HCT116 (cell line): ENCODE measurements at regions of chr10 and their contacts with region 1.

Region 1: GRCh38 chr10:69515699-69516259 is 57.4 kb downstream of the NEUROG3 start:
- DNase-seq: peak; percentile 47
- ATAC-seq: peak; percentile 96
- H3K4me3 ChIP-seq: no peak overlapping the region
- H3K27ac ChIP-seq: no peak overlapping the region
- H3K4me1 ChIP-seq: no peaks in the 10 kb centered on the region
- H3K27me3 ChIP-seq: no peaks in the 10 kb centered on the region
- CTCF ChIP-seq: peak; percentile 89 to 94 (median 89)
- POLR2A ChIP-seq: no peak
- RAD21 ChIP-seq: peak; percentile 93

Region 2: DNA sequence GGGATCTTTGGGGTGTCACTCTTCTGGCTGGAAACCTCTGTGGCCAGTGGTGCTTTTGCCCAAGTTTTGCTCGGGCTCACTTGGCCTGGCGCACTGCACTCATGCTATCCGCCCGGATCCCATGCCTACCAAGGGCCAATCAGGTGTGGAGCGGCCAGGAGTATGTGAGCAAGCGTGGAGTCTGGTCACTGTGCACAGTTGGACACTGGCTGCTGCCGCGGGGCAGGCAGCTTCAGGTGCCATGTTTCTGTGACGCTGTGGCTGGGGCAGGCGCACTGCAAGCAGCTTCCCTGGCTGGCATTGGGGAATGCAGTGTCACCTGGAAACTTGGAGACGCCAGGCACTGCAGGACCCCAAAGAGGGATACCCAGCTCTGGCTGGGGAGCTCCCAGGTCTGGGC is 12.2 kb after region 1 on chr10:
- CTCF ChIA-PET with region 1: interaction called, 25 read pairs
- POLR2A ChIA-PET with region 1: no interaction called
- RAD21 ChIA-PET with region 1: no interaction called
- intact Hi-C with region 1: no loop called
- DNase-seq: no peak
- ATAC-seq: no peak
- H3K4me3 ChIP-seq: no peak overlapping the region
- H3K27ac ChIP-seq: no peak overlapping the region
- H3K4me1 ChIP-seq: no peaks in the 10 kb centered on the region
- H3K27me3 ChIP-seq: no peaks in the 10 kb centered on the region
- CTCF ChIP-seq: no peak
- POLR2A ChIP-seq: no peak
- RAD21 ChIP-seq: no peak

Region 3: DNA sequence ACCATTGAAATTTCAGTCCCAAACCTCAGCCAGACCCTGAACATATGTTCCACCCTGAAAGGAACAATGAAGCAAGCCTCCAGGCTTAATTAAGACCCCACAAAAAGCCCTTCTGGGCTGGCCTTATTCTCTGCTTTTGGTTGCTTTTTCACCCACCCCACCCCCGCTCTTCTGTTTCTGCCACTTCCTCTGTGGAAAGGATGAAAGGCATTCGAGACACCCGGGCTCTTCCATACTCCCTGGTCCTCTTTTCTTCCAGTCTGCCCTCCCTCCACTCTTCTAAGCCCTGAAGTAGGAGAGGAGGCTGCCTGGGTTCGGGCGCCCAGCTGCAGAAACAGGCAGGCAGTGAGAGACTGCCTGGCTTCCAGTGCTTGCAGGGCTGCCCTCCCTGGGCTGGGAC is 104.8 kb after region 1 on chr10:
- CTCF ChIA-PET with region 1: no interaction called
- POLR2A ChIA-PET with region 1: no interaction called
- RAD21 ChIA-PET with region 1: no interaction called
- intact Hi-C with region 1: no loop called
- DNase-seq: no peak
- ATAC-seq: no peak
- H3K4me3 ChIP-seq: no peak overlapping the region
- H3K27ac ChIP-seq: no peak overlapping the region
- H3K4me1 ChIP-seq: no peaks in the 10 kb centered on the region; a peak in 1 of 4 replicates
- H3K27me3 ChIP-seq: no peaks in the 10 kb centered on the region
- CTCF ChIP-seq: no peak
- POLR2A ChIP-seq: no peak
- RAD21 ChIP-seq: no peak

Region 4: GRCh38 chr10:69644658-69645295 is 129.0 kb after region 1 on chr10:
- CTCF ChIA-PET with region 1: interaction called, 29 read pairs
- POLR2A ChIA-PET with region 1: no interaction called
- RAD21 ChIA-PET with region 1: interaction called in 1 of 2 experiments, 4 read pairs
- intact Hi-C with region 1: loop called (anchors 1 kb)
- DNase-seq: peak; percentile 35
- ATAC-seq: peak; percentile 84
- H3K4me3 ChIP-seq: no peak overlapping the region
- H3K27ac ChIP-seq: no peak overlapping the region
- H3K4me1 ChIP-seq: peaks cover 4 to 10% of the 10 kb centered on the region in 2 experiments
- H3K27me3 ChIP-seq: no peaks in the 10 kb centered on the region
- CTCF ChIP-seq: peak; percentile 85 to 93 (median 91)
- POLR2A ChIP-seq: no peak
- RAD21 ChIP-seq: peak; percentile 95